Pancreas (tissue), 10 donors: ENCODE measurements at regions of chr10 and their contacts with region 1.

Region 1: GRCh38 chr10:73644015-73644743 is 2.9 kb upstream of the MYOZ1 start:
- DNase-seq: peak in 4 of 6 donors; percentile 35 to 70 (median 43)
- ATAC-seq: peak; percentile 77 to 86 (median 83)
- H3K4me3 ChIP-seq: no peak overlapping the region
- H3K27ac ChIP-seq: no peak overlapping the region
- H3K4me1 ChIP-seq: no peaks in the 10 kb centered on the region
- H3K27me3 ChIP-seq: no peaks in the 10 kb centered on the region
- CTCF ChIP-seq: peak; percentile 67 to 77 (median 72)

Region 2: GRCh38 chr10:72895236-72895850 is 748.8 kb before region 1 on chr10:
- intact Hi-C with region 1: no loop called
- DNase-seq: no peak
- ATAC-seq: no peak
- H3K4me3 ChIP-seq: no peak overlapping the region
- H3K27ac ChIP-seq: no peak overlapping the region
- H3K4me1 ChIP-seq: no peaks in the 10 kb centered on the region
- H3K27me3 ChIP-seq: no peaks in the 10 kb centered on the region
- CTCF ChIP-seq: no peak

Region 3: DNA sequence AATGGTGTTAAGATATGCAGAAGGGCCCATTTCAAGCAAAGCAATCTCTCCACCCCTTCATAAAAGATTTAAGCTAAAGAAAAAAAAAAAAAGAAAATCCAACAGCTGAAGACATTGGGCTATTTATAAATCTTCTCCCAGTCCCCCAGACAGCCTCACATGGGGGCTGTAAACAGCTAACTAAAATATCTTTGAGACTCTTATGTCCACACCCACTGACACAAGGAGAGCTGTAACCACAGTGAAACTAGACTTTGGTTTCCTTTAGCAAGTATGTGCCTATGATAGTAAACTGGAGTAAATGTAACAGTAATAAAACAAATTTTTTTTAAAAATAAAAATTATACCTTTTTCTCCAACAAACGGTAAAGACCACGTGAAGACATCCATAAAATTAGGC is 177.0 kb before region 1 on chr10:
- intact Hi-C with region 1: no loop called
- DNase-seq: no peak
- ATAC-seq: no peak
- H3K4me3 ChIP-seq: no peak overlapping the region
- H3K27ac ChIP-seq: no peak overlapping the region
- H3K4me1 ChIP-seq: no peaks in the 10 kb centered on the region
- H3K27me3 ChIP-seq: no peaks in the 10 kb centered on the region
- CTCF ChIP-seq: no peak

Region 4: GRCh38 chr10:73517271-73517877 is 126.8 kb before region 1 on chr10:
- intact Hi-C with region 1: no loop called
- DNase-seq: no peak
- ATAC-seq: no peak
- H3K4me3 ChIP-seq: no peak overlapping the region
- H3K27ac ChIP-seq: no peak overlapping the region
- H3K4me1 ChIP-seq: no peaks in the 10 kb centered on the region
- H3K27me3 ChIP-seq: no peaks in the 10 kb centered on the region
- CTCF ChIP-seq: no peak

Region 5: DNA sequence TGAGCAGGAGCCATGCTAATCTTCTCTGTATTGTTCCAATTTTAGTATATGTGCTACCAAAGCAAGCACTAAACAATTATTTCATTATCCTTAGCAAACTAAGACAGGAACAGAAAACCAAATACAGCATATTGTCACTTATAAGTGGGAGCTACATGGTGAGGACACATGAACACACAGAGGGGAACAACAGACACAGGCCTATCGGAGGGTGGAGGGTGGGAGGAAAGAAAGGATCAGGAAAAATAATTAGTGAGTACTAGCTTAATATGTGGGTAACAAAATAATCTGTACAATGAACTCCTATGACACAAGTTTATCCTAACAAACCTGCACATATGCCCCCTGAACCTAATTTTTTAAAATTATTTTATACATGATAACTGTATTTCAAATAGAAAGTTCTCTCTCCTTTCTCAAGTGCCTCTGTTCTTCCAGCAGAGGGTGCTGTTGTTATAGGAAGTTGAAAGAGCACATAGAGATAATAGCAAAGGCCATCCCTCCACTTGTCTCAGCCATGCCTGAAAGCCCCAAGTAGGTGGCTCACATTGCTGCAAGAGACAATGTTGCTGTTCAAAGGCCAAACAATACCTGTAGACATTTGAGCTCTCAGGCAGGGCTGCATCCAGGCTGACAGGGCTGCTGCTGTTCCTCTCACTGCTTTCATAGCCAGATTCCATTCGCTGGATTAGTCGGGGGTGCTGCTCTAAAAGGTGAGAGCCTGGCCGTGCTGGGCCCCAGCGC is 114.9 kb before region 1 on chr10:
- intact Hi-C with region 1: loop called (anchors 2 to 10 kb)
- DNase-seq: peak in 3 of 6 donors; percentile 25 to 46 (median 43)
- ATAC-seq: peak; percentile 69 to 99 (median 92)
- H3K4me3 ChIP-seq: no peak overlapping the region
- H3K27ac ChIP-seq: no peak overlapping the region
- H3K4me1 ChIP-seq: no peaks in the 10 kb centered on the region
- H3K27me3 ChIP-seq: no peaks in the 10 kb centered on the region
- CTCF ChIP-seq: peak; percentile 60 to 79 (median 74)

Region 6: DNA sequence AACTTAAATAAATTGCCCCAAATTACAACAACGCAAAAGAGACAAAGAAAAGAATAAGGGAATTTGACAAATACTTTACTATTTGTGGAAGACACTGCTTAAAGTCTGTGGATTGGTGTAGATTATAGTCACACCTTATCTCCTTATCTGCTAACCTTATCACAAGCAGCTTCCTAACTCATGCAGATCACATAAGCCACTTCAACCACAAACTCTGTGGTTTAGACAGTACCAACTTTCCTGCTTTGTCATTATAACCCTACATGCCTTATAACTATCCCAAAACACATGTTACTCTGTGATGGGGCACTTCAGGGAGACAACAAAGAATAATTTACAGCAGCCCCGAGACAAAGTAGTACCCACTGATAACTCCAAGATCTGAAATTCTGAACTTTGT is 106.9 kb before region 1 on chr10:
- intact Hi-C with region 1: loop called in 1 of 3 experiments (anchors 10 kb)
- DNase-seq: no peak
- ATAC-seq: no peak
- H3K4me3 ChIP-seq: no peak overlapping the region
- H3K27ac ChIP-seq: no peak overlapping the region
- H3K4me1 ChIP-seq: no peaks in the 10 kb centered on the region
- H3K27me3 ChIP-seq: no peaks in the 10 kb centered on the region
- CTCF ChIP-seq: no peak